CD4-positive, alpha-beta memory T cell (primary cell): ENCODE measurements at regions of chr7 and their contacts with region 1.

Region 1: DNA sequence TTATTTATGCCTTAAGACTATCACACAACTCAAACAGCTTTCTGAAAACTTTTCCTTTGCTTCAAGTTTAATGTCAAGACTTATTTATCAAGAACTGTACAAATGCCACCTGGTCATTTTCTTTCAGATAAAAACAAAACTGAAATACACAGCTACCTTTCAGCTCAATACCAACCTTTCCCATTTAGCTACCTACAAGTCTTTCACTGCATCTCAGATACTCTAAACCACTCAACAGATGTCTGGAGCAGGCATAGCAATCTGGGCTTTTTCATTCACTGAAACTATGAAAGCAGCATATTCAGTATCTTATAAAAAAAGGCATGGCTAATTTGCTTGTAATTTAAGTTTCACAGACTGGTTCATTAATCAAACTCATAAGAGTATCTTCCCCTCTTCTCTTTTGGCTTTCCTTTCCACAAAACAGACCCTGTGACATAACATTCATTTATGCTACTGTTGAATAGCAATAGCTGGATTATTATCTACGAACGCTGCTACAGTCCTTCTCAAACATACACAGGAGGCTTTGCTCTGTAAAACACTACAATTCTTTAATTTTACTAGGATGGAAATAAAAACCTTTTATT is 8.2 kb downstream of the TRA2A start:
- DNase-seq: no peak
- H3K4me3 ChIP-seq: no peak overlapping the region
- H3K4me3 Mint-ChIP-seq: peak overlapping the region in 4 of 8 donors; percentile 7 to 69 (median 40)
- H3K27ac ChIP-seq: no peak overlapping the region
- H3K27ac Mint-ChIP-seq: peak overlapping the region in 2 of 7 donors; percentile 67 to 70
- H3K4me1 ChIP-seq: peaks cover 72% of the 10 kb centered on the region
- H3K4me1 Mint-ChIP-seq: peaks cover 43 to 77% (median 58%) of the 10 kb centered on the region in 4 donors
- H3K27me3 ChIP-seq: no peaks in the 10 kb centered on the region
- H3K27me3 Mint-ChIP-seq: no peaks in the 10 kb centered on the region

Region 2: GRCh38 chr7:23539494-23539907 is 15.9 kb after region 1 on chr7:
- CTCF ChIA-PET with region 1: interaction called, 16 read pairs
- POLR2A ChIA-PET with region 1: interaction called, 4 read pairs
- intact Hi-C with region 1: no loop called
- DNase-seq: peak in 3 of 5 donors; percentile 40 to 42 (median 41)
- H3K4me3 ChIP-seq: peak overlapping the region in 1 of 2 donors; percentile 18
- H3K4me3 Mint-ChIP-seq: peak overlapping the region; percentile 51 to 85 (median 76)
- H3K27ac ChIP-seq: peak overlapping the region; percentile 36
- H3K27ac Mint-ChIP-seq: peak overlapping the region; percentile 65 to 90 (median 84)
- H3K4me1 ChIP-seq: peaks cover 22% of the 10 kb centered on the region
- H3K4me1 Mint-ChIP-seq: peaks cover 12 to 16% (median 14%) of the 10 kb centered on the region in 4 donors
- H3K27me3 ChIP-seq: no peaks in the 10 kb centered on the region
- H3K27me3 Mint-ChIP-seq: no peaks in the 10 kb centered on the region